ENCODE measurements at regions of chr6 and their contacts with region 1.

Region 1: GRCh38 chr6:80004173-80005072 is at the start of gene TTK:
- DNase-seq: peak; percentile 98
- H3K4me3 Mint-ChIP-seq: peak within 1 kb of the TSS; percentile 98
- H3K27ac Mint-ChIP-seq: peak within 1 kb of the TSS; percentile 96
- H3K4me1 Mint-ChIP-seq: peaks cover 37% of the 10 kb centered on the region
- H3K27me3 Mint-ChIP-seq: peaks cover 6% of the 10 kb centered on the region
- total RNA-seq, gene TTK: 21.9 and 22.4 TPM in 2 replicates

Region 2: DNA sequence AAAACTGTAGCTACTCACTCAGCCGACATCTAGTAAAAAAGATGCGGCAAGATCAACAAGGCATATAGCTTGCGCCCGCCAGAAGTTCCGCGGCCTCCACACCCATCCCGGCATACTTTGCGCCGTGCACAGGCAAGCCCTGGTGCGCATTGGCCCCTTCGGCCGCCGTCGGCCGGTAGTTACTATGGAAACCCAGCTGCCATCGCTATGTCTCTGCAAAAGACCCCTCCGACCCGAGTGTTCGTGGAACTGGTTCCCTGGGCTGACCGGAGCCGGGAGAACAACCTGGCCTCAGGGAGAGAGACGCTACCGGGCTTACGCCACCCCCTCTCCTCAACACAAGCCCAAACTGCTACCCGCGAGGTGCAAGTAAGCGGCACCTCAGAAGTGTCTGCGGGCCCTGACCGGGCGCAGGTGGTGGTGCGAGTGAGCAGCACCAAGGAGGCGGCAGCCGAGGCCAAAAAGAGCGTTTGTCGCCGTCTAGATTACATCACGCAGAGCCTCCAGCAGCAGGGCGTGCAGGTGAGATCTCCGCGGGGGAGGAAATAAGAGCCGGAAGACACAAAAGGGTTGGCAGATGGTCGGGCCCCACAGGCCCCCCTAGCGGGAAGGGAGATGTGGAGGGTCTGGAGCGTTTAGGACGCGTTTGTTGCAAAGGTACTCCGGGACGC is 1136.9 kb before region 1 on chr6 and contains the start of gene IRAK1BP1:
- intact Hi-C with region 1: loop called (anchors 5 kb)
- DNase-seq: peak; percentile 95
- H3K4me3 Mint-ChIP-seq: peak within 1 kb of the TSS; percentile 97
- H3K27ac Mint-ChIP-seq: peak within 1 kb of the TSS; percentile 97
- H3K4me1 Mint-ChIP-seq: peaks cover 22% of the 10 kb centered on the region
- H3K27me3 Mint-ChIP-seq: peaks cover 4% of the 10 kb centered on the region
- total RNA-seq, gene IRAK1BP1: 3.4 and 3.6 TPM in 2 replicates

Region 3: DNA sequence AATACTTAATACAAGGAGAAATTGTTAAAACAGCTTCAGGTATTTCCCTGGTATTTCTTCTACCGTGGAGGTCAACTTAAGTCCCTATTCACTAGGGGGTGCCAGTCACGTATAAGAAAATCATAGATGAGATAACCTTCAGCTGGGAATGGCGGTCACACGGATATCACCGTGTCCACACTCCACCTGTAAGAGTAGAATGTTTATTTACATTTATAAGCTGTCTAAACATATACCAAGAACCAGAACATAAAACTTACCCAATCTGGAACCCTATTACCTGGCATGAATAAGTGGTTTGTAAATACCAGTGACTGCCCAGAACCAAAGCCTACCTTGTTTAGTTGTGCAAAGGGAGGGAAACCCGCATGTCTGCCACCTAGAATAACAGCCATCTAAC is 55.2 kb before region 1 on chr6:
- intact Hi-C with region 1: loop called (anchors 1 kb)
- DNase-seq: peak; percentile 89
- H3K4me3 Mint-ChIP-seq: no peak overlapping the region
- H3K27ac Mint-ChIP-seq: no peak overlapping the region
- H3K4me1 Mint-ChIP-seq: peaks cover 18% of the 10 kb centered on the region
- H3K27me3 Mint-ChIP-seq: peaks cover 45% of the 10 kb centered on the region

Region 4: GRCh38 chr6:79984261-79984660 is 20.2 kb before region 1 on chr6:
- intact Hi-C with region 1: no loop called
- DNase-seq: no peak
- H3K4me3 Mint-ChIP-seq: no peak overlapping the region
- H3K27ac Mint-ChIP-seq: no peak overlapping the region
- H3K4me1 Mint-ChIP-seq: no peaks in the 10 kb centered on the region
- H3K27me3 Mint-ChIP-seq: peaks cover 2% of the 10 kb centered on the region

Region 5: DNA sequence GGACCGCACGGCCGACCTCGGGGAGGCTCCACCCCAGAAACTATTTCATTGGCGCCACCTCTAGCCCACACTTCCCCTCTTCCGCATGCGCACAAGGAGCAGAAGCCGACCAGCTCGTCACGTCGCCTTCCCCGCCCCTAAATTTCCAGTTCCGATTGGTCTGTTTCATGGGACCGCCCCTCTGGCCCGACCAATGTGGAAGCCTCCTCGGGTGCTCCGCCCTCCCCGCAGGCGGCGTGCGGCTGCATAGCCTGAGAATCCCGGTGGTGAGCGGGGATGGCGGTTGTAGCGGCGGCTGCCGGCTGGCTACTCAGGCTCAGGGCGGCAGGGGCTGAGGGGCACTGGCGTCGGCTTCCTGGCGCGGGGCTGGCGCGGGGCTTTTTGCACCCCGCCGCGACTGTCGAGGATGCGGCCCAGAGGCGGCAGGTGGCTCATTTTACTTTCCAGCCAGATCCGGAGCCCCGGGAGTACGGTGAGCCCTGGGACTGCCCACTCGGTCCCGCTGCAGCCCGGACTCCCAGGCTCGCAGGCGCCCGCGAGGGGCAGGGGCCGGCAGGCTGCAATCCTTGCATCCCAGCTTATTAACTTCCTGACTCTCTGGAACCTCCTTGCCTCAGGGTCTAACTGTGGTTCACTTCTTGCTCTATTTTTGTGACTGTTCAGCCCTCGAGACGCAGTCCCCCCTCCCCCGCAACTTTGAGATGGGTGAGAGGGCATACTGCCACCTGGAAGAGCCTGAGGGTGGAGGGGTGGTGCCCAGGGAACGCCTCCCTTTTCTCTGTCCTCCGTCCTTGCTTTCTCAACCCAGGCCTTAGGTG is 102.2 kb after region 1 on chr6 and contains the start of gene BCKDHB:
- intact Hi-C with region 1: loop called (anchors 1 kb)
- DNase-seq: peak; percentile 99
- H3K4me3 Mint-ChIP-seq: peak within 1 kb of the TSS; percentile 89
- H3K27ac Mint-ChIP-seq: peak within 1 kb of the TSS; percentile 94
- H3K4me1 Mint-ChIP-seq: peaks cover 18% of the 10 kb centered on the region
- H3K27me3 Mint-ChIP-seq: peaks cover 9% of the 10 kb centered on the region
- total RNA-seq, gene BCKDHB: 15.6 and 16.5 TPM in 2 replicates

Region 6: DNA sequence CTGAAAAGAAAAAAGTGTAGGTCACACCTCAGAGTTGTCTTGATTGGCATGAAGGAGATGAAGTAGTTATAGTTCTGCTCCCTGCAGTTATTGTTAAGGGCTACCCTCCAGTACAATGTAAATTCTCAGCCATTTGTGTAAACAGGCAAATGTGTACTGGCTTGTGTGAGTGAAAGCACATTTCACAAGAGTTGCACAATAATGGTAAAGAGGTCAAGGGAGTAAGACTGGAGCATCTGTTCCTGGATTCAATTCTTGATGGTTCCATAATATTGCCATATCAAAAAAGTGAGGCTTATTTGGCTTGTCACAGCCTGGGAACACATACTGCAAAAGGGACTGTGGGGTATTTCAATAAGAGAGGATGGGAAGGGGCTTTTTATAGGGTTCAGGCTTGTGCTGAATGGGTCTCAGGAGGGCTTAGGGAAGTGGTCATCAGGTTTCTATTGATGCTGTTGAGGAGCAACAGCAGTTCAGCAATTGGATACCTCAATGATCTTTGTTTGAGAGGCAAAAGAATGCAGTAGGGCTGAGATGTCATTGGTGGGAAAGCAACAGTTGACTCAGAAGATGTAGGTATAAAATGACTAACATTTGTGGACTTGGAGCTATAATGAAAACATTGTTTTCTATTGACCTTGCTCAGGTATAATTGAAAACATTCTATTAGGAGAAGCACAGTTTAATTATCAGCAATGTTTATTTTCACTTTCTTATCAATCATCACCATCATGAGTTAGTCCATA is 504.6 kb after region 1 on chr6:
- intact Hi-C with region 1: no loop called
- DNase-seq: no peak
- H3K4me3 Mint-ChIP-seq: no peak overlapping the region
- H3K27ac Mint-ChIP-seq: no peak overlapping the region
- H3K4me1 Mint-ChIP-seq: no peaks in the 10 kb centered on the region
- H3K27me3 Mint-ChIP-seq: no peaks in the 10 kb centered on the region

Region 7: GRCh38 chr6:81752138-81752920 is 1747.9 kb after region 1 on chr6 and contains the start of gene TENT5A:
- intact Hi-C with region 1: loop called (anchors 10 kb)
- DNase-seq: peak; percentile 95
- H3K4me3 Mint-ChIP-seq: peak within 1 kb of the TSS; percentile 89
- H3K27ac Mint-ChIP-seq: peak within 1 kb of the TSS; percentile 74
- H3K4me1 Mint-ChIP-seq: peaks cover 21% of the 10 kb centered on the region
- H3K27me3 Mint-ChIP-seq: peaks cover 60% of the 10 kb centered on the region
- total RNA-seq, gene TENT5A: 0.30 and 0.90 TPM in 2 replicates

Measured in activated CD4-positive, alpha-beta T cell treated with anti-CD3 and anti-CD28 coated beads, Interleukin-2, amount 10 ng/mL, durations not matched to agents 24 days and 14 days (primary cell).